B cell (primary cell): ENCODE measurements at regions of chr2 and their contacts with region 1.

Region 1: DNA sequence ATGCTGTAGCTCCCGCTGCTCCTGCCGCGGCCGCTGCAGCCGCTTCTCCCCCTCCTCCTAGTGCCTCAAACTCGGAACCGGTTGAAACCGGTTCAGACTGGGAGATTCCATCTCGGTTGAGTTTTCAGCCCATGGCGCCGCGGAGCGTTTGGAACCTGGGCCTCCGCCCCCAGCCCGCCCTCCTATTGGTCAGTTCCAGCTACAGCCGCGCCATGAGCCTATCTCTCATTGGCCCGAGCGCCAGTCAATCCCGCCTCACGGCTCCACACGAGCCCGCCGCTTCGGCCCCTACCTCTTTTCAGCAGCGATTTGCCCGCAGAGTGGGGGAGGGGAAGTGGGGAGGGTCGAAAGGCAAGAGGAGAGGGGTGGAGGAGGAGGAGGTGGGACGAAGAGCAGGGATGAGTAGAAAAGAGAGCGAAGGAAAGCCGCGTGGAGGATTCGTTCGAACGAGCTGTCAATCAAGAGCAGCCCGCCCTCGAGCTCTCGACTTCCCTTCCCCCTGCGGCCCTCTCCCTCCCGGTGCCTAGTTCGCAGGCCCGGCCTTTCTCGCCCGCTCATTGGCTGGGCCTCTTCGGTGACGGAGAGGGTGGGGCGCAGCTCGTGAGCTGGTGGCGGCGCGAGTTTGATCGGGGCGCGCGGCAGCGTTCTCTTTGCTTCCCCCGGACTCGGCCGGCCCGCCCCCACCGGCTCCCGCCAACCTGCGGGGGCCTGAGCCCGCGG is at the start of gene XPO1:
- DNase-seq: peak; percentile 100
- ATAC-seq: peak; percentile 77
- H3K4me3 ChIP-seq: peak within 1 kb of the TSS; percentile 69 to 88 (median 73)
- H3K4me3 Mint-ChIP-seq: peak within 1 kb of the TSS; percentile 99
- H3K27ac ChIP-seq: peak within 1 kb of the TSS; percentile 99 to 100
- H3K27ac Mint-ChIP-seq: peak within 1 kb of the TSS; percentile 100
- H3K4me1 ChIP-seq: peaks cover 22 to 26% of the 10 kb centered on the region in 2 donors
- H3K4me1 Mint-ChIP-seq: peaks cover 37% of the 10 kb centered on the region
- H3K27me3 ChIP-seq: no peaks in the 10 kb centered on the region
- H3K27me3 Mint-ChIP-seq: no peaks in the 10 kb centered on the region
- CTCF ChIP-seq: no peak
- total RNA-seq, gene XPO1: 208 and 219 TPM in 2 replicates

Region 2: DNA sequence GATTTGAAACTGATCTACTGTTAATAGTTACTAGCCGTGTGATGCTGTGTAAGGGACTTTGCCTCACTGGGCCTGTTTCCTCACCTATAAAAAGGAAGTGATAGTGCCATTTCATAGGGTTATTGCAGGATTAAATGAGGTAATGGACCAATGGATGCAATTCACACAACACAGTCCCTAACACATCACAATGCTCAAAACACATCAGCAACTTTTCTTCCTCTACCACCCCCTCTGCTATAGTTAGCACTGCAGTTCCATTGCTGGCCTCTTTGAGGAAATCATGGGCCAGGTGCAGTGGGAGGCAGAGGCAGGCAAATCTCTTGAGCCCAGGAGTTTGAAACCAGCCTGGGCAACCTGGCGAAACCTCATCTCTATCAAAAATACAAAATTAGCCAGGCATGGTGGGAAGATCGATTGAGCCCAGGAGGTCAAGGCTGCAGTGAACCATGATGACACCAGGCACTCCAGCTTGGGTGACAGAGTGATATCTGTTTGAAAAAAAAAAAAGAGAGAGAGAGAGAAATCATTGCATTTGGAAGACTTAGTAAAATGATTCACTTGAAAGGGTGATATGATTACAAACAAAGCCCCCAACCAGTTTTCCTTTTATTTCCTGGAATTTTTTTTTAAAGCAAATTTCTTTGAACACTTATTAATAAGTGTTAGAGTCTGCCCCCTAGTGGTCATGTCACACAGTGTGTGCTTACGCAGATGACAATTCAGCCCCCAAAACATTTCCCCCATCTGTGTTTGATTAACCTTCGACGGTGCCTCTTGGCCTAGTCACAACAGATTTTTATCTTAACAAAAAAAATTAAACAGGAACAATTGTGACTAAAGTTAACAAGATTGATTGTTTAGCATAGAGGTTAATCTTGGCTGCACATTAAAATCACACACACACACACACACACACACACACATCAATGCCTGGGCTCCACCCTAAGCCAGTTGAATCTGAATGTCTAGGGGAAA is 896.3 kb before region 1 on chr2:
- CTCF ChIA-PET with region 1: no interaction called
- POLR2A ChIA-PET with region 1: no interaction called
- intact Hi-C with region 1: no loop called
- DNase-seq: peak; percentile 67
- ATAC-seq: peak; percentile 58
- H3K4me3 ChIP-seq: no peak overlapping the region
- H3K4me3 Mint-ChIP-seq: no peak overlapping the region
- H3K27ac ChIP-seq: no peak overlapping the region
- H3K27ac Mint-ChIP-seq: no peak overlapping the region
- H3K4me1 ChIP-seq: peaks cover 15 to 16% of the 10 kb centered on the region in 2 donors
- H3K4me1 Mint-ChIP-seq: peaks cover 22% of the 10 kb centered on the region
- H3K27me3 ChIP-seq: no peaks in the 10 kb centered on the region
- H3K27me3 Mint-ChIP-seq: peaks cover 3% of the 10 kb centered on the region
- CTCF ChIP-seq: peak; percentile 86

Region 3: GRCh38 chr2:61016808-61017555 is 521.4 kb before region 1 on chr2:
- CTCF ChIA-PET with region 1: no interaction called
- POLR2A ChIA-PET with region 1: no interaction called
- intact Hi-C with region 1: loop called (anchors 5 kb)
- DNase-seq: peak; percentile 83
- ATAC-seq: peak; percentile 69
- H3K4me3 ChIP-seq: peak overlapping the region; percentile 81 to 98 (median 94)
- H3K4me3 Mint-ChIP-seq: peak overlapping the region; percentile 100
- H3K27ac ChIP-seq: peak overlapping the region; percentile 69 to 84
- H3K27ac Mint-ChIP-seq: peak overlapping the region; percentile 98
- H3K4me1 ChIP-seq: peaks cover 5 to 19% of the 10 kb centered on the region in 2 donors
- H3K4me1 Mint-ChIP-seq: peaks cover 37% of the 10 kb centered on the region
- H3K27me3 ChIP-seq: no peaks in the 10 kb centered on the region
- H3K27me3 Mint-ChIP-seq: no peaks in the 10 kb centered on the region
- CTCF ChIP-seq: no peak

Region 4: DNA sequence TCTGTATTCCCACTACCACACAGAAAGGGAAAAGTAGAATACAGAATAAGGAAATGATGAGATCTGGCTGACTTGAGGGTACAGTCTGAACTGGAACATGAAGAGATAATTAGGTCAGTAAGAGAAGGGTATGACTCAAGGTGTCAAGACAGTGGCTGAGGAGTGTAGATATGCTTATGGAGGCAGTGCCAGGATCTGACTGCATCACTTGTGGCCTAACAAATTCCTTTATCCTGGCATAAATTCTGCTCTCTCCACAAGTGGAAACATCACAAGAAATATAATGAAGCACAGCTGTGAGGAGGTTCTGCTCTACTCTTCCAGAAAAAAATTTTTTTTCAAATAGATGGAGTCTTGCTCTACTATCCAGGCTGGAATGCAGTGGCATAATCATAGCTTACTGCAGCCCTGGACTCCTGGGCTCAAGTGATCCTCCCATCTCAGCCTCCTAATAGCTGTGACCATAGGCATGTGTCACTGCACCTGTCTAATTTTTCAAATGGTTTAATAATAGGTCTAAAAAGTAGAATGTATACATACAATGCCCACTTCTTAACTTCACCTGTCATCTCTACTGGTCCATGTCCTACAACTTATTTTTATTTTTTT is 291.1 kb before region 1 on chr2:
- CTCF ChIA-PET with region 1: no interaction called
- POLR2A ChIA-PET with region 1: no interaction called
- intact Hi-C with region 1: no loop called
- DNase-seq: no peak
- ATAC-seq: no peak
- H3K4me3 ChIP-seq: no peak overlapping the region
- H3K4me3 Mint-ChIP-seq: no peak overlapping the region
- H3K27ac ChIP-seq: no peak overlapping the region
- H3K27ac Mint-ChIP-seq: no peak overlapping the region
- H3K4me1 ChIP-seq: no peaks in the 10 kb centered on the region
- H3K4me1 Mint-ChIP-seq: no peaks in the 10 kb centered on the region
- H3K27me3 ChIP-seq: no peaks in the 10 kb centered on the region
- H3K27me3 Mint-ChIP-seq: no peaks in the 10 kb centered on the region
- CTCF ChIP-seq: no peak

Region 5: GRCh38 chr2:61426267-61426897 is 112.0 kb before region 1 on chr2:
- CTCF ChIA-PET with region 1: interaction called, 8 read pairs
- POLR2A ChIA-PET with region 1: interaction called, 10 read pairs
- intact Hi-C with region 1: loop called (anchors 5 kb)
- DNase-seq: peak; percentile 87
- ATAC-seq: peak; percentile 86
- H3K4me3 ChIP-seq: no peak overlapping the region
- H3K4me3 Mint-ChIP-seq: peak overlapping the region; percentile 60
- H3K27ac ChIP-seq: peak overlapping the region; percentile 83 to 90
- H3K27ac Mint-ChIP-seq: peak overlapping the region; percentile 91
- H3K4me1 ChIP-seq: peaks cover 45 to 50% of the 10 kb centered on the region in 2 donors
- H3K4me1 Mint-ChIP-seq: peaks cover 73% of the 10 kb centered on the region
- H3K27me3 ChIP-seq: no peaks in the 10 kb centered on the region
- H3K27me3 Mint-ChIP-seq: no peaks in the 10 kb centered on the region
- CTCF ChIP-seq: peak; percentile 89

Region 6: DNA sequence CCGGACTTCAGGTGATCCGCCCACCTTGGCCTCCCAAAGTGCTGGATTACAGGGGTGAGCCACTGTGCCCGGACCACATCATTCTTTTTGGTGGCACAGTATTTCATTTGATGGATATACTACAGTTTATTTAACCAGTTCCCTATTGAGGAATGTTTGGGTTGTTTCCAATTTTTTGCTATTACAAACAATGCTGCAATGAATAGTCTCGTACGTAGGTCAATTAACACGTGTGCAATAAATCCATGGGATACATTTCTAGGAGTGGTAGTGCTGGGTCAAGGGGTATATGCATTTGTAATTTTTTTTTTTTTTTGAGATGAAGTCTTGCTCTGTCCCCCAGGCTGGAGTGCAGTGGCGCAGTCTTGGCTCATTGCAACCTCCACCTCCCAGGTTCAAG is 28.2 kb after region 1 on chr2:
- CTCF ChIA-PET with region 1: no interaction called
- POLR2A ChIA-PET with region 1: no interaction called
- intact Hi-C with region 1: no loop called
- DNase-seq: no peak
- ATAC-seq: no peak
- H3K4me3 ChIP-seq: no peak overlapping the region
- H3K4me3 Mint-ChIP-seq: no peak overlapping the region
- H3K27ac ChIP-seq: no peak overlapping the region
- H3K27ac Mint-ChIP-seq: no peak overlapping the region
- H3K4me1 ChIP-seq: no peaks in the 10 kb centered on the region
- H3K4me1 Mint-ChIP-seq: no peaks in the 10 kb centered on the region
- H3K27me3 ChIP-seq: no peaks in the 10 kb centered on the region
- H3K27me3 Mint-ChIP-seq: peaks cover 6% of the 10 kb centered on the region
- CTCF ChIP-seq: no peak

Region 7: DNA sequence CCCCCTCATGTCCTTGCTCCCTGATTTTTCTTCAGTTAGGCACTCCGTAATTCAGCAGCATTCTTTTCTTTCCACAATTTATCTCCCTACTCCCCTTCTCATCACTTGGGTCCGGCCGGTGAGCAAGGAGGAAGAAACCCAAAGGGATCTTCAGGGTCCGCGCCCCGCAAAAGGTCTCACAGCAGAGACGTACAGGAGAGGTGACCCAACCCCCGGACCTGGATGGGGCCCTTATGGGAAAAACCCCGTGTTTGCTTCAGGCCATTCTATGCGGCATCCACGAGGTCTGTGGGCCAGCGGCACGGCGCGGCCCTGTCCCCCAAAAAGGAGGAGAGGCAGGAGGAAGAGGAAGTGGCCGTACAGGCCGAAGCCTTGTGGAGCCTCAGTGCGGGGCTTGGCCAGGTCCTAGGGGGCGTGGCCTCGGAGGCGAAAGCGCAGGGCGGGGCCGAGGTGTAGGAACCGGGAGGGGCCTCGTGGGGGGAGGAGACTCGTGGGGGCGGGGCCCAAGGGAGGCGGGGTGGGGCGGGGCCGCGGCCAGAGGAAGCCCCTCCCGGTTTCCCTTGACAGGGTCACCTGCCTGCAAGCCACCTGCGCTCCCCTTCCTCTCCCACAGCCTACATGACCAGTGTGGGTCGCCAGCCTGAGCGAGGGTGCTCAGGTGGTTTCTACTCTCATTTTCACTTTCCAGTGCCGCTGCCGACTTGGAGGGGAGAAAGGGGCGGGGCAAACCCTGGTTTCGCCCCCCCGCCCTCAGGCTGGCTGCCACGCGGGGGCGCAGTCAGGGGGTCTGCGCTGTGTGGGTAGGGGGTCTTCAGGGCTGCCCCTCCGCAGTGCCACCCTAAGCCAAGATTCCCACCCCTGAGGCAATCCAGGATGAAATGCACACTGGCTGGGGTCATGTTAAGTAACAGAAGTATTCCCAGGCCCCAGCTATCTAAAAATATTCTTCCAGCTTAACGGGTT is 156.2 kb after region 1 on chr2:
- CTCF ChIA-PET with region 1: no interaction called
- POLR2A ChIA-PET with region 1: no interaction called
- intact Hi-C with region 1: loop called (anchors 1 kb)
- DNase-seq: peak; percentile 94
- ATAC-seq: peak; percentile 96
- H3K4me3 ChIP-seq: peak overlapping the region; percentile 50 to 84 (median 79)
- H3K4me3 Mint-ChIP-seq: peak overlapping the region; percentile 94
- H3K27ac ChIP-seq: peak overlapping the region; percentile 54 to 82
- H3K27ac Mint-ChIP-seq: peak overlapping the region; percentile 88
- H3K4me1 ChIP-seq: peaks cover 9 to 17% of the 10 kb centered on the region in 2 donors
- H3K4me1 Mint-ChIP-seq: peaks cover 13% of the 10 kb centered on the region
- H3K27me3 ChIP-seq: no peaks in the 10 kb centered on the region
- H3K27me3 Mint-ChIP-seq: no peaks in the 10 kb centered on the region
- CTCF ChIP-seq: peak; percentile 70

Region 8: GRCh38 chr2:61854474-61855182 is 316.3 kb after region 1 on chr2:
- CTCF ChIA-PET with region 1: no interaction called
- POLR2A ChIA-PET with region 1: interaction called, 6 read pairs
- intact Hi-C with region 1: loop called (anchors 1 kb)
- DNase-seq: peak; percentile 96
- ATAC-seq: peak; percentile 83
- H3K4me3 ChIP-seq: peak overlapping the region; percentile 92 to 99 (median 98)
- H3K4me3 Mint-ChIP-seq: peak overlapping the region; percentile 94
- H3K27ac ChIP-seq: peak overlapping the region; percentile 56 to 68
- H3K27ac Mint-ChIP-seq: peak overlapping the region; percentile 92
- H3K4me1 ChIP-seq: peaks cover 11 to 16% of the 10 kb centered on the region in 2 donors
- H3K4me1 Mint-ChIP-seq: peaks cover 23% of the 10 kb centered on the region
- H3K27me3 ChIP-seq: no peaks in the 10 kb centered on the region
- H3K27me3 Mint-ChIP-seq: no peaks in the 10 kb centered on the region
- CTCF ChIP-seq: no peak

Region 9: DNA sequence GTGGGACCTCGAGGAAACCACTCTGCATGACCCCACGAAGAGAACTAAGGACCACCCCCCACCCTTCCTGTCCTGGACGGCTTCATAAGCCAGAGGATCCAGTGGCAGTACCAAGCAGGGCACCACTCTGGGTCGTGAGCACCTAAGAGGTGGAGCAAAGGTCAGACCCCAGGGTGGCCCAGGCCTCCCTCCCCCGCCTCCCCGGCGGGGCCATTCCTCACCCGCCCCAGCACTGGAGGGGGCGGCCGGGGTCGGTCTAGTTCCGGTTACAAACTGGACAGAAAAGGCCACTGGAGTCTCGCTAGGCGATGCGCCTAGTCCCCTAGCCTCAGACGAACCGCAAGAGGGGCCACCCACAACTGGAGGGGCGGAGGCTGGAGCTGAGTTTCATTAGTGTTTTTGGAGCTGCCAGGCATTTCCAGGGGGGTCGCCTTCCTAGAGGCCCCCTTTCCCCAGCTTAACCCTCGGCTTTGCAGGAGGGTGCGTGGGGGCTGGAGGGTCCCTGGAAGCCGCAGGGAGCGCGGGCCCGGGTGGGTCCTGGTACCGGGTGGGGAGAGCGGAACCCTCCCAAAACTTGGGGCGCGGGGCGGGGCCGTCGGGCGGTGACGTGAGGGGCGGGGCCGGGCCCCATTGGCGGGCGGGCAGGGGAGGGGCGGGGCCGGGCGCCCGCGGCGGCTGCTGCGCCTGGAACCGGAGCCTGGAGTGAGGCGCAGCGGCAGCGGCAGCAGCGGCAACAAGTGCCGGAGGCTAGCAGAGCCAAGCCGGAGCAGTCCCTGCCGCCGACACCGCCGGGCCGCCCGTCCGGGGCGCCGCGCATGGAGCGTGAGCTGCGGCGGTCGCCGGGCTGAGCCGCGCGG is 657.3 kb after region 1 on chr2 and contains the start of gene B3GNT2:
- CTCF ChIA-PET with region 1: no interaction called
- POLR2A ChIA-PET with region 1: no interaction called
- intact Hi-C with region 1: loop called (anchors 5 kb)
- DNase-seq: peak; percentile 90
- ATAC-seq: peak; percentile 81
- H3K4me3 ChIP-seq: peak within 1 kb of the TSS; percentile 68 to 96 (median 93)
- H3K4me3 Mint-ChIP-seq: peak within 1 kb of the TSS; percentile 91
- H3K27ac ChIP-seq: peak within 1 kb of the TSS; percentile 80 to 89
- H3K27ac Mint-ChIP-seq: peak within 1 kb of the TSS; percentile 89
- H3K4me1 ChIP-seq: peaks cover 38 to 44% of the 10 kb centered on the region in 2 donors
- H3K4me1 Mint-ChIP-seq: peaks cover 37% of the 10 kb centered on the region
- H3K27me3 ChIP-seq: no peaks in the 10 kb centered on the region
- H3K27me3 Mint-ChIP-seq: no peaks in the 10 kb centered on the region
- CTCF ChIP-seq: no peak
- total RNA-seq, gene B3GNT2: 14.2 and 14.3 TPM in 2 replicates